Prostate gland (tissue), 2 donors: ENCODE measurements at regions of chr12 and their contacts with region 1.

Region 1: DNA sequence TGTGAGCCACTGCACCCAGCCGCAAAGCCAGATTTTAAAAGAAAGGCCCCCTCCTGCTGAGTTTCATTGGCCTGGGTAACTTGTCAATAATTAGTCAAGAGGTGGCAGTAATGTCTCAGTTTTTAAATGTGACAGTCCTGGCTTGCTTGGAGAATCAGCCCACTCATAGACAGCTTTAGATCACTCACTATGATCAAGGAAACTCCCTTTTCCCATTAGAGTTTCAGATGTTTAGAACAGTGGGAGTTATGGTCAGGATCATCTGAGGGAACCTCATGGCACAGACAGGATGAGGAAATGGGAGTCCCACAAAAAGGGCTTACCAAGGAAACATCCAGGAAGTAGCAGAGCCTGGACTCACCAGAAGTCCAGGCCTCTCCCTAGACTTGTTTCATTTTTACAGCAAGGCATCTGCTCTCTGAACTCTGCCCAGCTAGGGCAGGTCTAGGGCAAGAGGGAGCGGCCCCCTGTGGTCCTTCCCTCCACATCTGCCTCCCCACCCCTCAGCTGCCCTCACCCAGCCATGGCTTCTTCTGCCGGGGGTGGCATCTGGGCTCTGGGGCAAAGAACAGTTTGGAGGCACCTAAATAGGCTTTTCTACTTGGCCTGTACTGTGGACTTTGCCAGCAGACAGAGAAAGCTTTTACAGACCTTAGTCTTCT is 11.2 kb downstream of the BCL2L14 start:
- DNase-seq: no peak
- H3K4me3 ChIP-seq: no peak overlapping the region
- H3K27ac ChIP-seq: peak overlapping the region in 1 of 2 donors; percentile 49
- H3K4me1 ChIP-seq: no peaks in the 10 kb centered on the region
- H3K27me3 ChIP-seq: no peaks in the 10 kb centered on the region
- CTCF ChIP-seq: peak in 2 of 4 experiments; percentile 32 to 43
- POLR2A ChIP-seq: no peak

Region 2: DNA sequence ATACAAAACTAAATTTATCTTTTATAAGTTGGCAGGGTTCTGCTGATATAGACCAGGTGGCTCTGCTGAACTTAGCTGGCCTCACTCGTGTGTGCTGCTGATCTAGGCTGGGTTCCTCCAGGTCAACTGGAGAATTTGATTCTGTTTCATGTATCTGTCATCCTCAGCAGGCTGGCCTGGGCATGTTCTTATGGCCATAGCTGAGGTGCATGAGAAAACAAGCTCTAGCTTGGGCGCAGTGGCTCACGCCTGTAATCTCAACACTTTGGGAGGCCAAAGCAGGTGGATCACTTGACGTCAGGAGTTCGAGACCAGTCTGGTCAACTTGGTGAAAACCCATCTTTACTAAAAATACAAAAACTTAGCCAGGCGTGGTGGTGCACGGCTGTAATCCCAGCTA is 35.6 kb before region 1 on chr12:
- intact Hi-C with region 1: no loop called
- DNase-seq: no peak
- H3K4me3 ChIP-seq: no peak overlapping the region
- H3K27ac ChIP-seq: no peak overlapping the region
- H3K4me1 ChIP-seq: no peaks in the 10 kb centered on the region
- H3K27me3 ChIP-seq: no peaks in the 10 kb centered on the region
- CTCF ChIP-seq: no peak
- POLR2A ChIP-seq: no peak

Region 3: GRCh38 chr12:12327802-12328201 is 245.8 kb after region 1 on chr12:
- intact Hi-C with region 1: loop called (anchors 2 kb)
- DNase-seq: peak; percentile 35
- H3K4me3 ChIP-seq: no peak overlapping the region
- H3K27ac ChIP-seq: no peak overlapping the region
- H3K4me1 ChIP-seq: no peaks in the 10 kb centered on the region
- H3K27me3 ChIP-seq: no peaks in the 10 kb centered on the region
- CTCF ChIP-seq: peak in 3 of 4 experiments; percentile 60 to 72 (median 68)
- POLR2A ChIP-seq: no peak